WTC11 (cell line): ENCODE measurements at regions of chr11 and their contacts with region 1.

Region 1: DNA sequence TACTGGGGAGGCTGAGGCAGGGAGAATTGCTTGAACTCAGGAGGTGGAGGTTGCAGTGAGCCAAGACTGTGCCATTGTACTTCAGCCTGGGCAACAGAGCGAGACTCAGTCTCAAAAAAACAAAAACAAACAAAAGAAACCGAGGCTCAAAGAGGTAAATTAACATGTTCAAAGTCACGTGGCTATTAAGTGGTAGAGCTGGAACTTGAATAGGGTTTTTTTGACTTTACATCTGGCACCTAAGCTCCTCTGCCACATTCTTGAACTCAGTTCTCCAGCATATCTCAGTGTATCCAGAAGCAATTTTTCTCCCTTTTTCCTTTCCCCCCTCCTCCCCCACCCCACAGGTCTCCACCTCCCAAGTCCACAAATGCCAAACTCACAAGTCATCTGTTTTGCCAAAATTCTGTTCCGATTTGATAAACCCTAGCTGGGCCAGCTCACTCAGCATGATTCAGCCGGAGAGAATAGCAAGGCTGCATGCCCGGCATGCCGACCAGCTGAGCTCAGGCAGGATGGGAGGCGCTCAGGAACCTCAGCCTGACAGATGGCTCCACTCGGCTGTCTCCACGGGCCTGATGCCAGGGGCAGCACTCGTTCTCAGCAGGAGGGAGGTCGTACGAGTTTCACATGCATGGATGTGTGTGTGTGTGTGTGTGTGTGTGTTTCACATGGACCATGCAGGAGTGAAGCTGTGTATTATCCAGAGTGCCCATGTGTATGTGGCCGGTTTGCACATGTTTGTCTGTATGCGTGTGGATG is 63.2 kb upstream of the RRAS2 start:
- DNase-seq: peak; percentile 69
- ATAC-seq: peak; percentile 91
- H3K4me3 Mint-ChIP-seq: no peak overlapping the region
- H3K27ac Mint-ChIP-seq: no peak overlapping the region
- H3K4me1 Mint-ChIP-seq: peaks cover 12% of the 10 kb centered on the region
- H3K27me3 Mint-ChIP-seq: no peaks in the 10 kb centered on the region; the same call in 1 of the 2 replicates
- CTCF ChIP-seq: no peak

Region 2: GRCh38 chr11:14308114-14308896 is 113.9 kb before region 1 on chr11:
- CTCF ChIA-PET with region 1: interaction called, 255 read pairs
- POLR2A ChIA-PET with region 1: no interaction called
- DNase-seq: no peak
- ATAC-seq: peak; percentile 41
- H3K4me3 Mint-ChIP-seq: no peak overlapping the region
- H3K27ac Mint-ChIP-seq: peak overlapping the region; percentile 28; the same call in 1 of the 2 replicates
- H3K4me1 Mint-ChIP-seq: peaks cover 52% of the 10 kb centered on the region
- H3K27me3 Mint-ChIP-seq: no peaks in the 10 kb centered on the region
- CTCF ChIP-seq: peak; percentile 38; the same call in 1 of the 2 replicates

Region 3: GRCh38 chr11:14342906-14343305 is 79.3 kb before region 1 on chr11:
- CTCF ChIA-PET with region 1: interaction called, 10 read pairs
- POLR2A ChIA-PET with region 1: no interaction called
- DNase-seq: no peak
- ATAC-seq: no peak
- H3K4me3 Mint-ChIP-seq: no peak overlapping the region
- H3K27ac Mint-ChIP-seq: peak overlapping the region; percentile 98
- H3K4me1 Mint-ChIP-seq: peaks cover 70% of the 10 kb centered on the region
- H3K27me3 Mint-ChIP-seq: no peaks in the 10 kb centered on the region
- CTCF ChIP-seq: no peak

Region 4: GRCh38 chr11:14373931-14374646 is 48.1 kb before region 1 on chr11:
- CTCF ChIA-PET with region 1: interaction called, 14 read pairs
- POLR2A ChIA-PET with region 1: interaction called, 3 read pairs
- DNase-seq: no peak
- ATAC-seq: no peak
- H3K4me3 Mint-ChIP-seq: no peak overlapping the region
- H3K27ac Mint-ChIP-seq: no peak overlapping the region
- H3K4me1 Mint-ChIP-seq: peaks cover 22% of the 10 kb centered on the region
- H3K27me3 Mint-ChIP-seq: peaks cover 5% of the 10 kb centered on the region; the same call in 1 of the 2 replicates
- CTCF ChIP-seq: no peak

Region 5: GRCh38 chr11:14386895-14387480 is 35.2 kb before region 1 on chr11:
- CTCF ChIA-PET with region 1: interaction called, 15 read pairs
- POLR2A ChIA-PET with region 1: no interaction called
- DNase-seq: peak; percentile 53
- ATAC-seq: peak; percentile 94
- H3K4me3 Mint-ChIP-seq: no peak overlapping the region
- H3K27ac Mint-ChIP-seq: no peak overlapping the region
- H3K4me1 Mint-ChIP-seq: peaks cover 14% of the 10 kb centered on the region
- H3K27me3 Mint-ChIP-seq: peaks cover 11% of the 10 kb centered on the region
- CTCF ChIP-seq: no peak